ENCODE measurements at regions of chr17 and their contacts with region 1.

Region 1: GRCh38 chr17:48113201-48113676 is 5.7 kb downstream of the SNX11 start:
- DNase-seq: peak; percentile 41 to 60 (median 55)
- H3K4me3 ChIP-seq: peak overlapping the region in 1 of 2 donors; percentile 41
- H3K4me3 Mint-ChIP-seq: peak overlapping the region; percentile 17 to 78 (median 48)
- H3K27ac ChIP-seq: peak overlapping the region; percentile 16
- H3K27ac Mint-ChIP-seq: peak overlapping the region; percentile 69 to 93 (median 89)
- H3K4me1 ChIP-seq: peaks cover 51% of the 10 kb centered on the region
- H3K4me1 Mint-ChIP-seq: peaks cover 30 to 47% (median 37%) of the 10 kb centered on the region in 4 donors
- H3K27me3 ChIP-seq: no peaks in the 10 kb centered on the region
- H3K27me3 Mint-ChIP-seq: no peaks in the 10 kb centered on the region

Region 2: DNA sequence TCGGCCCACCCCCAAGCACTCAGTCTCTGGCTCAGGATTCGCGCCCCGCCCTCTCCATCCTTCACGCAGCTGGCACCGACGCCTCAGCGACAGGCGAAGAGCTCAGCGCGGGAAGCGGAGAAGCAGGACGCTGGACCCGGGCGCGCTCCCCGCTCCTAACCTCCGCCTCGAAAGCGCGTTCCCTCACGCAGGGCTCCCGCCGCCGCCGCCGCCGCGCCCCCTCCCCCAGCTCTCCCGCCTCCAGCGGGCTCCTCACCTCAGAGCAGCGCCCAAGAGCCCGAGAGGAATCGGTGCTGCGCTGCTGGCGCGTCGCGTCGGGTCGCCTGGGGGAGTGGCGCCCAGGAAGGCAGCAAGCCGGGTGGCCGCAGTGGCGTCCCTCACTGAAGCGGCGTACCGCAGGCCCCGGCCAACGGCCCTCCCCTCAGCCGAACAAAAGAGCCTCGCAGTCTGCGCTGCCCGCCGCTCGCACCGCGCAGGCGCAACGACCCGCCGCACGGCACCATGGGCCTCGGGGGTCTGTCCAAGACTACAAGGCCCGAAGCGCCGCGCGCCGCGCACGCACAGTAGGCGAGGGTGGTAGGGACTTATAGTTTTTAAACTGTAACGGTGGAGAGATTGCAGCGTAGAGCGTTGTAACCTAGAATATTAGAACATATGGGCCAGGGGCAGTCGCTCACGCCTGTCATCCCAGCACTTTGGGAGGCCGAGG is 12.1 kb before region 1 on chr17 and contains the start of gene CBX1:
- CTCF ChIA-PET with region 1: interaction called, 20 read pairs
- POLR2A ChIA-PET with region 1: interaction called, 20 read pairs
- intact Hi-C with region 1: no loop called
- DNase-seq: peak; percentile 93 to 96 (median 93)
- H3K4me3 ChIP-seq: peak within 1 kb of the TSS; percentile 36 to 76
- H3K4me3 Mint-ChIP-seq: peak within 1 kb of the TSS; percentile 87 to 95 (median 90)
- H3K27ac ChIP-seq: peak within 1 kb of the TSS; percentile 33
- H3K27ac Mint-ChIP-seq: peak within 1 kb of the TSS; percentile 74 to 93 (median 88)
- H3K4me1 ChIP-seq: peaks cover 18% of the 10 kb centered on the region
- H3K4me1 Mint-ChIP-seq: peaks cover 21 to 49% (median 31%) of the 10 kb centered on the region in 4 donors
- H3K27me3 ChIP-seq: no peaks in the 10 kb centered on the region
- H3K27me3 Mint-ChIP-seq: no peaks in the 10 kb centered on the region
- total RNA-seq, gene CBX1: 33.9 to 37.1 TPM

Region 3: DNA sequence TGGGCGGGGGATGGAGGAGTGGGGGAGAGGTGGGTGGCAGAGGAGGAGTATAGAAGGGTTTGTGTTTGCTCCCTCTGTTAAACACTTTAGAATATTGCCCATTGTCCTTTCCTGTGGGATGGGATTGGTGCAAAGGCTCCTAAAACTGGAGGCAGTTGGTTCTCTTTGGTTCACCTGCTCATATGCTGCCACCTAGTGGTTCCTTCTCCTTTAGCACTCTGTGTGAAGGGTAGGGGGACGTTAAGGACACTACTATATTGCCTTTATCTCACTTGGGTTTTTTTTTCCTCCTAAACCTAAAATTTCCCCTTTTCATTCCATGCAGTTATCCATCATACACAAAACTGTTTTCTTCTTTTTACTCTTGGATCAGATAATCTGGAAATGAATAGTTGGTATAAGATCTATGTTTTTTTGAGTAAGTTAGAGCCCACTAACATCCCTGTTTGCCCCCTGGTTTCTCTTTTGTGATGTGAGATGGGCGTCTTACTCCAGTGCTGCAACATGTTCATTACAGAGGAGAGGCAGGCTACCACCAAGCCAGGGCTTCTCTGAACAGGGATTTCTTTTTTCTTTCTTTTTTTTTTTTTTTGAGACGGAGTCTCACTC is 18.1 kb after region 1 on chr17:
- CTCF ChIA-PET with region 1: interaction called, 8 read pairs
- POLR2A ChIA-PET with region 1: no interaction called
- intact Hi-C with region 1: loop called (anchors 1 kb)
- DNase-seq: peak; percentile 49 to 59 (median 50)
- H3K4me3 ChIP-seq: no peak overlapping the region
- H3K4me3 Mint-ChIP-seq: no peak overlapping the region
- H3K27ac ChIP-seq: no peak overlapping the region
- H3K27ac Mint-ChIP-seq: peak overlapping the region in 5 of 7 donors; percentile 23 to 87 (median 62)
- H3K4me1 ChIP-seq: no peaks in the 10 kb centered on the region
- H3K4me1 Mint-ChIP-seq: peaks cover 0 to 5% (median 2%) of the 10 kb centered on the region in 4 donors
- H3K27me3 ChIP-seq: no peaks in the 10 kb centered on the region
- H3K27me3 Mint-ChIP-seq: no peaks in the 10 kb centered on the region